AG04449 (cell line): ENCODE measurements at regions of chr1 and their contacts with region 1.

Region 1: DNA sequence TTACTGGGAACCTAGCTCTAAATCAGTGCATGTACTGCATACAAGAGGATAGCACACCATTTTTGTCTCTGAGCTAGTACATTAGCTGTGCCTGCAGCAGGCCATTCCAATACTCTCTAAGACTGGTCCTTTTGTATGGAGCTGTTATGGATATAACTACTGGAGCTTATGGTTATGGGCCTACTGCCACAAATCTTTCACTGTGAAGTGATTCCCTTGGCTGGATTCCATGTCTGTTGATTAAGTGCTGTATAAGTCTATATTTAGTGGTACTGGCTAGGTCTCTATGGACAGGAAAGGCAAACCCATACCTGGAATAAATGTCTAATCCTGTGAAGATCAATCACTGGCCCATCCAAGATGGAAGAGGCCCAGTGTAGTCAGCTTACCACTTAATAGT is 12.0 kb downstream of the ZFYVE9 start:
- DNase-seq: no peak
- H3K4me3 ChIP-seq: no peak overlapping the region
- CTCF ChIP-seq: no peak

Region 2: GRCh38 chr1:52141513-52142219 is 12.2 kb before region 1 on chr1 and contains the start of gene ZFYVE9:
- CTCF ChIA-PET with region 1: interaction called, 16 read pairs
- POLR2A ChIA-PET with region 1: no interaction called
- DNase-seq: no peak
- H3K4me3 ChIP-seq: peak within 1 kb of the TSS; percentile 79
- CTCF ChIP-seq: peak; percentile 79